ENCODE measurements at regions of chr15 and their contacts with region 1.

Region 1: GRCh38 chr15:91782221-91782620 is 71.3 kb upstream of the SLCO3A1 start:
- DNase-seq: no peak
- ATAC-seq: no peak

Region 2: GRCh38 chr15:91706322-91707032 is 75.7 kb before region 1 on chr15:
- intact Hi-C with region 1: loop called (anchors 10 kb)
- DNase-seq: peak; percentile 68
- ATAC-seq: peak; percentile 92

Region 3: GRCh38 chr15:91826443-91826842 is 44.2 kb after region 1 on chr15:
- intact Hi-C with region 1: no loop called
- DNase-seq: no peak
- ATAC-seq: no peak

Measured in left ventricle myocardium superior (tissue), 1 donor.